Activated T-helper 2 cell treated with anti-CD3 and anti-CD28 coated beads, Interferon-gamma antibody, Interleukin-2, Interleukin-4, amounts not matched to agents 10 μg/mL and 5 μg/mL and 100 μg/mL, durations not matched to agents 14 hours and 24 hours and 36 hours (primary cell): ENCODE measurements at regions of chr7 and their contacts with region 1.

Region 1: GRCh38 chr7:27662490-27663205 is at the start of gene HIBADH:
- DNase-seq: peak; percentile 95
- H3K4me3 Mint-ChIP-seq: peak within 1 kb of the TSS; percentile 83
- H3K27ac Mint-ChIP-seq: peak within 1 kb of the TSS; percentile 79
- H3K4me1 Mint-ChIP-seq: peaks cover 16% of the 10 kb centered on the region
- H3K27me3 Mint-ChIP-seq: peaks cover 2% of the 10 kb centered on the region
- total RNA-seq, gene HIBADH: 23.1 and 27.9 TPM in 2 replicates

Region 2: DNA sequence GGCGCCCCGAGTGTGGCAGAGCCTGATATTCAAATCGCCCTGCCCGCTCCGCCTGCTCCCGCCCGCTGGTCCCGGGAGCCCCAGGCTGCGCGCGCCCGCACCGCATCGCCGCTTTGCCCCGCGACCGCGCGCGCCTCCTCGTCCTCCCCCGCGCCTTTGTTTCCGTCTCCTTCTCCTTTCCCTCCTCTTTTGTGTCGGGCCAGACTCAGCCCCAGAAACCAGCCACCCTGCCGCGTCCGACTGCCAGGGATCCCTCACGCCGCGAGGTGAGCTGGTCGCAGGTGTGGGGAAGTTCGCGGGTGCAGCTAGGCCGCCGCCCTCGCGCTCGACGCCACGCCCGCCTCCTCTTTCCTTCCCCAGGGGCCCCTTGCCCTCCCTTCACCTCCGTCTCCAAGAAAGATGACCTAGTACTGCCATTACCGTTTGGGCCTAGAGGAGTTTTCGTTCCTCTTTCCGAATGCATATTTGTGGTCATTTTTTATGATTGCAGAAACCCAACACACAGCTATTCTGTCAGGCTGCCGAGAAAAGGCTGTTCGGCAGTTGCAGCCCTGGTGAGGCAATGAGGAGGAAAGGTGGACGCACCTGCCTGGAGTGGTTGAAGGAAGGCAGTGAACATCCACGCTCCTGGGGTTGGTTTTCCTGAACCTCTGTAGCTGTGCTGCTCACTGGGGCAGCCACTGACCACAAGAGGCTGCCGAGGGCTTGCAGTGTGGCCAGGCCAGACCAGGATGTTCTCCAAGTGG is 1263.7 kb before region 1 on chr7:
- intact Hi-C with region 1: loop called (anchors 10 kb)
- DNase-seq: peak; percentile 22
- H3K4me3 Mint-ChIP-seq: peak overlapping the region; percentile 97
- H3K27ac Mint-ChIP-seq: peak overlapping the region; percentile 97
- H3K4me1 Mint-ChIP-seq: peaks cover 15% of the 10 kb centered on the region
- H3K27me3 Mint-ChIP-seq: peaks cover 47% of the 10 kb centered on the region

Region 3: GRCh38 chr7:27739909-27740448 is 77.3 kb after region 1 on chr7 and contains the start of gene TAX1BP1:
- intact Hi-C with region 1: loop called (anchors 1 kb)
- DNase-seq: peak; percentile 92
- H3K4me3 Mint-ChIP-seq: peak within 1 kb of the TSS; percentile 91
- H3K27ac Mint-ChIP-seq: peak within 1 kb of the TSS; percentile 98
- H3K4me1 Mint-ChIP-seq: peaks cover 29% of the 10 kb centered on the region
- H3K27me3 Mint-ChIP-seq: peaks cover 6% of the 10 kb centered on the region
- total RNA-seq, gene TAX1BP1: 90.6 and 97.1 TPM in 2 replicates

Region 4: DNA sequence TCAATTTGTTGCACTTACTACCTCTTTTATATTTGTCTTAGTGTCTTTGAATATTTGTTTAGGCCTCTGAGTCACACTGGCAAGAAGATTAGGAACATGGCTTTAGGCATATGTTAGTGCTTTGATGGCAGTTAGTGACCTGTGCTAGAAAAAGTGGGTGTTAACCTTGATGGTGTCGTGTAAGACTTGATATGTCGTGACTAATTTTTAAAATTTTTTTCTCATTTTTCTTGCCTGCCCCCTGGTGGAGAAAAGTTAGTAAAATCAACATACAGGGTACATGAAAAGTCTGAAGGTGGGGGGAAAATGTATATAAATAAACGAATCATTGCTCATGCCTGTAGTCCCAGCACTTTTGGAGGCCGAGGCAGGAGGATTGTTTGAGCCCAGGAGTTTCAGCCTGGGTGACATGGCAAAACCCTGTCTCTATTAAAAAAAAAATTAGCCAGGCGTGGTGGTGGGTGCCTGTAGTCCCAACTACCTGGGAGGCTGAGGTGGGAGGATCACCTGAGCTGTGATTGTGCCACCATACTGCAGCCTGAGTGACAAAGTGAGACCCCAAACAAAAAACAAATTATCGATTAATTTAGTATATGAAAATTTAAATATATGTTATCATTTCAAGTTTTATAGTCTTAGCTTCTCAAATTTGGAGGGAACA is 121.9 kb after region 1 on chr7:
- intact Hi-C with region 1: loop called (anchors 2 kb)
- DNase-seq: no peak
- H3K4me3 Mint-ChIP-seq: no peak overlapping the region
- H3K27ac Mint-ChIP-seq: no peak overlapping the region
- H3K4me1 Mint-ChIP-seq: peaks cover 18% of the 10 kb centered on the region
- H3K27me3 Mint-ChIP-seq: no peaks in the 10 kb centered on the region

Region 5: GRCh38 chr7:27901028-27901760 is 238.5 kb after region 1 on chr7:
- intact Hi-C with region 1: loop called (anchors 10 kb)
- DNase-seq: peak; percentile 22
- H3K4me3 Mint-ChIP-seq: no peak overlapping the region
- H3K27ac Mint-ChIP-seq: no peak overlapping the region
- H3K4me1 Mint-ChIP-seq: peaks cover 24% of the 10 kb centered on the region
- H3K27me3 Mint-ChIP-seq: peaks cover 21% of the 10 kb centered on the region